Posterior cingulate gyrus (tissue), 11 donors: ENCODE measurements at regions of chr14 and their contacts with region 1.

Region 1: DNA sequence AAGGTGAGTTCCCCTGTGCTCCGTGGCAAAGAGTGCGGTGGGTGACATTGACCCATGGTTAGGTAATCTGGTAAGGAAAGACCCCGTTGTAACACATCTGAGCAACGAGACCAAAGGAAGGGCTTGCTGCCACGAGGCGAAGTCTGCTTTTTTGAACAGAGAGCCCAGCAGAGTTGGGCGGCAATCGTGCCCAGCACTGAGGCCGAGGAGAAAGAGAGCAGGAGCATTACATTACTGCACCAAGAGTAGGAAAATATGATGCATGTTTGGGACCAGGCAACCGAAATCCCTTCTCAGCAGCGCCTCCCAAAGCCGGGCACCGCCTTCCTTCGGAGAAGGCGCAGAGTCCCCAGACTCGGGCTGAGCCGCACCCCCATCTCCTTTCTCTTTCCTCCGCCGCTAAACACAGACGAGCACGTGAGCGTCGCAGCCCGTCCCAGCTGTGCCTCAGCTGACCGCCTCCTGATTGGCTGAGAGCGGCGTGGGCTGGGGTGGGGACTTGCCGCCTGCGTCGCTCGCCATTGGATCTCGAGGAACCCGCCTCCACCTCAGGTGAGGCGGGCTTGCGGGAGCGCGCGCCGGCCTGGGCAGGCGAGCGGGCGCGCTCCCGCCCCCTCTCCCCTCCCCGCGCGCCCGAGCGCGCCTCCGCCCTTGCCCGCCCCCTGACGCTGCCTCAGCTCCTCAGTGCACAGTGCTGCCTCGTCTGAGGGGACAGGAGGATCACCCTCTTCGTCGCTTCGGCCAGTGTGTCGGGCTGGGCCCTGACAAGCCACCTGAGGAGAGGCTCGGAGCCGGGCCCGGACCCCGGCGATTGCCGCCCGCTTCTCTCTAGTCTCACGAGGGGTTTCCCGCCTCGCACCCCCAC is at the start of gene HIF1A:
- DNase-seq: peak; percentile 90 to 99 (median 94)

Region 2: DNA sequence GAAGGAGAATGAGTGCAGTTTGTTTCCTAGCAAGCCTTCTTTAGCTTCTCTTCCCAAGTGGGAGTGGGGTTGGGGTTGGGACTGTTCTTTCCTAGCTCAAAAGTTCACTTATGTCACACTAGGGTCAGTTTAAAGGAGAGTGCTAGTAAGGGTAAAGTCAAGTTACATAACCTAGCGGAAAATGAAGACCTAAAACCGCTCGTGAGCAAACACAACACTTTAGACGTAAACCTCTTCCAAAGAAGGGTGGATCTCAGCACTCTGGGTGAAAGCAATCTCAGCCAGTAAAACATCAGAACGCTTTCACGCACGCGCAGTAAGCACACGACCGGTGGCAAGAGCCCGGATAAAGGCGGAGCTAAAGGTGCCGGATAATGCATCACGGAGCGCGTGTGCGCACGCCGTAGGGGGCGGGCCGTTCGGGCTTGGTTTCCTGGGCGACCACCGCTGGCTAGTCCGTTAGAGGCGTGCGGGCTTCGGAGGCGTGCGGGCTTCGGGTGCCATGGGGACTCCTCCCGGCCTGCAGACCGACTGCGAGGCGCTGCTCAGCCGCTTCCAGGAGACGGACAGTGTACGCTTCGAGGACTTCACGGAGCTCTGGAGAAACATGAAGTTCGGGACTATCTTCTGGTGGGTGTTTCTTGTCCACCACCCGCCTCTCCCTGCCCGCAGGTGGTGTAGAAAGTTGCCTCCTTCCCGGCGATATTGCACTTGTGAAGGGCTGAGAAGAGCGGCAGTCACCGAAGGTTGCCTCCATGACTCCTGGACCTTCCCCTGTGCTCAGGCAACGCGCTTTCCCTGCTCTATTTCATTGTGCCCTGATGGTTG is 67.1 kb after region 1 on chr14 and contains the start of gene SNAPC1:
- intact Hi-C with region 1: loop called (anchors 1 kb)
- DNase-seq: peak; percentile 91 to 99 (median 95)

Region 3: GRCh38 chr14:61992139-61992538 is 297.1 kb after region 1 on chr14:
- intact Hi-C with region 1: no loop called
- DNase-seq: no peak